CD4-positive, alpha-beta T cell (primary cell): ENCODE measurements at regions of chr6 and their contacts with region 1.

Region 1: GRCh38 chr6:6661684-6662083 is 73.2 kb downstream of the LY86 start:
- DNase-seq: peak in 2 of 14 experiments; percentile 16 to 35
- ATAC-seq: no peak
- H3K4me3 ChIP-seq: no peak overlapping the region
- H3K4me3 Mint-ChIP-seq: no peak overlapping the region
- H3K27ac ChIP-seq: no peak overlapping the region
- H3K27ac Mint-ChIP-seq: peak overlapping the region; percentile 89
- H3K4me1 ChIP-seq: peaks cover 8% of the 10 kb centered on the region
- H3K4me1 Mint-ChIP-seq: peaks cover 64% of the 10 kb centered on the region
- H3K27me3 ChIP-seq: no peaks in the 10 kb centered on the region
- H3K27me3 Mint-ChIP-seq: no peaks in the 10 kb centered on the region
- CTCF ChIP-seq: no peak

Region 2: DNA sequence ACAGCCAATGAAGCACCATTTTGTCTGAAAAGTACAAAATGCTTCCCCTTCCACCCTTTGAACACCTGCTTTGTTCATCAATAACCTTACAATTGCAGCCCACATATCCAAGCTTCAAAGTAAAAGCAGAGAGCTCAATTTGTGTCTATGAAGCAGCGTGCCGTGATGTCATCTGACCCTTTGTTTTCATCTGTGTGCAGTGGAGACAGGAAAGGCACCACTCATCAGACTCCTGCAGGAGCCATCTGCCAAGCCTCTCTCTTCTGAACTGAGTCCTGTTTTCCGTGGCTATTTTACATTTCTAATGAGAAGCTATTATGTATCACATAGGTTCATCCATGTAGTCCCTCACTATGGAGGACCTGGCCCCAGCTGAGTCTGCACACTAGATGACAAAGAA is 80.6 kb before region 1 on chr6:
- CTCF ChIA-PET with region 1: no interaction called
- POLR2A ChIA-PET with region 1: interaction called, 10 read pairs
- intact Hi-C with region 1: loop called in 1 of 2 experiments (anchors 2 kb)
- DNase-seq: peak in 5 of 14 experiments; percentile 19 to 54 (median 37)
- ATAC-seq: peak; percentile 84
- H3K4me3 ChIP-seq: no peak overlapping the region
- H3K4me3 Mint-ChIP-seq: peak overlapping the region; percentile 1
- H3K27ac ChIP-seq: no peak overlapping the region
- H3K27ac Mint-ChIP-seq: peak overlapping the region; percentile 85
- H3K4me1 ChIP-seq: peaks cover 13% of the 10 kb centered on the region
- H3K4me1 Mint-ChIP-seq: peaks cover 54% of the 10 kb centered on the region
- H3K27me3 ChIP-seq: no peaks in the 10 kb centered on the region
- H3K27me3 Mint-ChIP-seq: no peaks in the 10 kb centered on the region
- CTCF ChIP-seq: no peak

Region 3: GRCh38 chr6:6588064-6588923 is 73.4 kb before region 1 on chr6 and contains the start of gene LY86:
- CTCF ChIA-PET with region 1: no interaction called
- POLR2A ChIA-PET with region 1: interaction called, 11 read pairs
- intact Hi-C with region 1: loop called in 1 of 2 experiments (anchors 10 kb)
- DNase-seq: peak in 5 of 14 experiments; percentile 5 to 48 (median 25)
- ATAC-seq: peak; percentile 59
- H3K4me3 ChIP-seq: peak within 1 kb of the TSS; percentile 34
- H3K4me3 Mint-ChIP-seq: peak within 1 kb of the TSS; percentile 84
- H3K27ac ChIP-seq: peak within 1 kb of the TSS; percentile 7 to 39
- H3K27ac Mint-ChIP-seq: peak within 1 kb of the TSS; percentile 95
- H3K4me1 ChIP-seq: peaks cover 49% of the 10 kb centered on the region
- H3K4me1 Mint-ChIP-seq: peaks cover 87% of the 10 kb centered on the region
- H3K27me3 ChIP-seq: no peaks in the 10 kb centered on the region
- H3K27me3 Mint-ChIP-seq: no peaks in the 10 kb centered on the region
- CTCF ChIP-seq: no peak
- total RNA-seq, gene LY86: 1.3 to 2.1 TPM

Region 4: DNA sequence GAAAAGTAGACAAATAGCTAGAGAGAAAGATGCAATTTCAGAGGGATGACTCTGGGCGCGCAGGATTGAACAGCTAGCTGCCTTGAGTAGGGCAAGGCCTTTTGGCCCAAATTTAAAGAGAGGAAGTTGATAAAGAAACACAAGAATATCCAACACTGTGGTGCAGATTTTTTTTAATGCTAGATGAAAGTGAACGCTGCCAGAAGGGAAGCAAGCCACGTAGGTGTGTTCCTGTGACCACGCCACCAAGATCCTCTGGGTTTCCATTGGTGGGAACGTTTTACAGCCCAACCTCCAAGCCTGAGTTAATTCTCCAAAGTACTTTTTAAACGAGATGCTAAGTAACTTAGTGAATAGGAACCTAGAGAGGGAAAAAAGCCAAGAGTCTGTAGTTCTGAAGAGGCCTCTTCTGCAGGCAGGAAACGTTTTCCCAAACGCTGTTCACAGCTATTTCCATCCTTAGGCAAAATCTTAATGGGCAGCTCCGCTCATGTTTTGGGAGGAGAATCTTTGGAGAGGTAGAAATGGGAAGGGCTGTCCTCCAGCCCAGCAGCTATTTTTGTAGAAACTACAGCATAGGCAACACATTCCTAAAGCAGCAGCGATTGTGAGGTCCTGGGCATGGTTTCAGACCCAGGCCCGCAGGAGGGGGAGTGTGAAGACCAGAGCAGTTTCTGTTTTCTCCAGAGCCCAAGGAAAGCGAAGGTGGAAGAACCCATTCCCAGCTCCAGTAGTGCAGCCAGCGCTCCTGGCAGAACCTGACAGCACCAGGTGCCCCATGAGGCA is 65.0 kb before region 1 on chr6:
- CTCF ChIA-PET with region 1: no interaction called
- POLR2A ChIA-PET with region 1: interaction called, 11 read pairs
- intact Hi-C with region 1: loop called in 1 of 2 experiments (anchors 10 kb)
- DNase-seq: peak in 4 of 14 experiments; percentile 13 to 48 (median 23)
- ATAC-seq: peak; percentile 88
- H3K4me3 ChIP-seq: no peak overlapping the region
- H3K4me3 Mint-ChIP-seq: peak overlapping the region; percentile 50
- H3K27ac ChIP-seq: no peak overlapping the region
- H3K27ac Mint-ChIP-seq: peak overlapping the region; percentile 67
- H3K4me1 ChIP-seq: peaks cover 34% of the 10 kb centered on the region
- H3K4me1 Mint-ChIP-seq: peaks cover 67% of the 10 kb centered on the region
- H3K27me3 ChIP-seq: no peaks in the 10 kb centered on the region
- H3K27me3 Mint-ChIP-seq: no peaks in the 10 kb centered on the region
- CTCF ChIP-seq: no peak